Sigmoid colon (tissue), 7 donors: ENCODE measurements at regions of chr16 and their contacts with region 1.

Region 1: GRCh38 chr16:68902008-68902968 is 59.0 kb downstream of the TANGO6 start:
- DNase-seq: no peak
- H3K4me3 ChIP-seq: no peak overlapping the region
- H3K27ac ChIP-seq: peak overlapping the region in 1 of 4 donors; percentile 65
- H3K4me1 ChIP-seq: peaks cover 0 to 15% (median 10%) of the 10 kb centered on the region in 4 donors
- H3K27me3 ChIP-seq: no peaks in the 10 kb centered on the region
- CTCF ChIP-seq: peak in 3 of 4 experiments; percentile 41 to 59 (median 47)
- EP300 ChIP-seq: no peak
- POLR2A ChIP-seq: no peak

Region 2: DNA sequence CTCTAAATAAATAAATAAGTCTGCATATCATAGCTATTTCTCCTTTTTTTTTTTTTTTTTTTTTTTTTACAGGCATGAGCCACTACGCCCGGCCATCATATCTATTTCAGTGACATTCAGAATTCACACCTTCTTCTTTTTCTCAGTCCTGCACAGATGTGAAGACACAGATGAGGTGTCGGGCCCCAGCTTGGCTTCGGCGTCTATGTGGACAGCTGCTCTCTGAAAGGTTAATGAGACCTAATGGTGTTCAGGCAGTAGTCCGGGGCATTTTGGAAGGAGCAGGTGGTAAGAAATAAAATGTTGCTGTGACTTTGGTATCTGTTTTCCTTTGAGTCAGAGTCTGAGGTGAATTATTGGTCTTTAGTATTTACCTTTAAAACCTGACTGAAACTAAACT is 35.4 kb before region 1 on chr16:
- intact Hi-C with region 1: no loop called
- DNase-seq: no peak
- H3K4me3 ChIP-seq: no peak overlapping the region
- H3K27ac ChIP-seq: no peak overlapping the region
- H3K4me1 ChIP-seq: no peaks in the 10 kb centered on the region
- H3K27me3 ChIP-seq: no peaks in the 10 kb centered on the region
- CTCF ChIP-seq: no peak
- EP300 ChIP-seq: no peak
- POLR2A ChIP-seq: no peak

Region 3: GRCh38 chr16:69123910-69124309 is 221.6 kb after region 1 on chr16:
- intact Hi-C with region 1: loop called (anchors 2 kb)
- DNase-seq: no peak
- H3K4me3 ChIP-seq: no peak overlapping the region
- H3K27ac ChIP-seq: no peak overlapping the region
- H3K4me1 ChIP-seq: peaks cover 0 to 14% (median 4%) of the 10 kb centered on the region in 4 donors
- H3K27me3 ChIP-seq: no peaks in the 10 kb centered on the region
- CTCF ChIP-seq: peak; percentile 30 to 68 (median 62)
- EP300 ChIP-seq: no peak
- POLR2A ChIP-seq: no peak

Region 4: GRCh38 chr16:69310653-69311532 is 408.6 kb after region 1 on chr16 and contains the start of gene VPS4A:
- intact Hi-C with region 1: no loop called
- DNase-seq: peak; percentile 98
- H3K4me3 ChIP-seq: peak within 1 kb of the TSS; percentile 74 to 89 (median 85)
- H3K27ac ChIP-seq: peak within 1 kb of the TSS; percentile 87 to 93 (median 88)
- H3K4me1 ChIP-seq: peaks cover 0 to 28% (median 20%) of the 10 kb centered on the region in 4 donors
- H3K27me3 ChIP-seq: no peaks in the 10 kb centered on the region
- CTCF ChIP-seq: peak; percentile 28 to 94 (median 50)
- EP300 ChIP-seq: no peak
- POLR2A ChIP-seq: peak in 1 of 2 donors; percentile 19
- total RNA-seq, gene VPS4A: 31.7 to 39.3 (median 34.8) TPM